PC-3 (cell line): ENCODE measurements at regions of chr3 and their contacts with region 1.

Region 1: GRCh38 chr3:69439643-69440270 is 53.9 kb upstream of the FRMD4B start:
- DNase-seq: peak; percentile 26
- ATAC-seq: no peak
- H3K4me3 ChIP-seq: peak overlapping the region; percentile 37; the same call in 1 of the 2 replicates
- H3K27ac ChIP-seq: no peak overlapping the region
- H3K4me1 ChIP-seq: no peaks in the 10 kb centered on the region
- H3K27me3 ChIP-seq: no peaks in the 10 kb centered on the region
- CTCF ChIP-seq: peak; percentile 65

Region 2: DNA sequence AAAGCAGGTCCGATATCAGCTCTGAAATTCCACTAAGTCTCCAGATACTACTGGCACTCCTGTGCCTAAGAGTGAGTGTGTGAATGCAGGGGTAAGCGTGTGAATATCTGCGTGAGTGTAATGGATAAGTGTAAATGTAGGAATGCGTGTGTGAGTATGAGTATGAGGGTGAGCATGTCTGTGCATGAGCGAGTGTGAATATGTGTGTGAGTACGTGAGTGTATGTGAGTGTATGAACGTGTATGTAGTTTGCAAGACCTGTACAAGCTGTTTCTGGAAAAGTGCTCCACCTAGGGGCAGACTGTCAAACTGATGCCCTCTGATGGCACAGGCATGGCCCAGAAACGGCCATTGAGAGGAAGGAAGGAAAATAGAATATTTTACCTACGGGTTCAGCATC is 29.5 kb before region 1 on chr3:
- CTCF ChIA-PET with region 1: no interaction called
- POLR2A ChIA-PET with region 1: interaction called, 10 read pairs
- intact Hi-C with region 1: no loop called
- DNase-seq: peak; percentile 63
- ATAC-seq: peak; percentile 90
- H3K4me3 ChIP-seq: no peak overlapping the region
- H3K27ac ChIP-seq: no peak overlapping the region
- H3K4me1 ChIP-seq: peaks cover 11% of the 10 kb centered on the region
- H3K27me3 ChIP-seq: no peaks in the 10 kb centered on the region
- CTCF ChIP-seq: peak; percentile 60

Region 3: GRCh38 chr3:69510481-69511030 is 70.8 kb after region 1 on chr3:
- CTCF ChIA-PET with region 1: no interaction called
- POLR2A ChIA-PET with region 1: no interaction called
- intact Hi-C with region 1: loop called (anchors 10 kb)
- DNase-seq: no peak
- ATAC-seq: no peak; the same call in 1 of the 2 replicates
- H3K4me3 ChIP-seq: no peak overlapping the region
- H3K27ac ChIP-seq: no peak overlapping the region
- H3K4me1 ChIP-seq: no peaks in the 10 kb centered on the region
- H3K27me3 ChIP-seq: no peaks in the 10 kb centered on the region
- CTCF ChIP-seq: no peak